Esophagus muscularis mucosa (tissue), 4 donors: ENCODE measurements at regions of chr2 and their contacts with region 1.

Region 1: DNA sequence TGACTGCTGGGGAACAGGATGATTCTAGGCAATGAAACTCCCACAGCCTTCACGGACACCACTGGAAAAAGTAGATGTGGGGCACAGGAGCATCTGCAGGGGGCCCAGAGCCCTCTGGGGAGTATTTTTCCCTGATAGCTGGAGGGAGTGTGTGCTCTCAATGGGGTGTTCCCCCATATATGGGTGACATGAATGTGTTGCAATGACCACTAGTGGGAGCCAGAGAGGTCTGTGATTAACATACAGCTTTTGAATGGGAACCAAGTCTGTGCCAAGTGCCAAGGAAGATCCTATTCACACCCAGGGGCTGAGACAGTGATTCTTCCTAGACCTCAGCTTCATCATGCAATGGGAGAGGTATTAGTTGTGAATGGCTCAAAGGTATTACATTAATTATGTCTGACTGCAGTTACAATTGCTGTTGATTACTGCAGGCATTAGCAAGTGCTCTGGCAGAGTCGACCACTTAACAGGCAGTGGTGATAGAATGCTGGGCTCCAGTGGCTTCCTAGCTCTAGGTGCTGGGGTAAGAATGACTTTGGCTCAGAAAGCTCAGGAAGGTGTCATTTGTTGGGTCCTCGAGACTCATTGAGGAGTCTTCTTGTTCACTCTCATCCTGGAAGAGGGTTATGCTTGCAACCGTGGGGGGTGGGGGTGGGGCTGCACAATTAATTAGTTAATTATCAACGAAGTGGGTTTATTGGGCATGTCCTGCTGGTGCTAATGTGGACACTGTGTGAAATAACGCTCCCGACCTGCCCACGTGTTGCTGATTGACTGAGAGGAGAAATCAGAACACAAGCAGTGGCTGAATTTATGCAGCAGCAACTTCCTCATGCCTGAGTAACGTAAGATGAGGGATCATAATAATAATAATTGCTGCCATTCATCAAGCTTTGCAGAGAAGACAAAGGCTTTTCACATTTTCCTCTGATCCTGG is 194.1 kb downstream of the CLIP4 start:
- DNase-seq: no peak
- H3K4me3 ChIP-seq: no peak overlapping the region
- H3K27ac ChIP-seq: no peak overlapping the region
- H3K4me1 ChIP-seq: no peaks in the 10 kb centered on the region
- H3K27me3 ChIP-seq: peaks cover 0 to 16% (median 0%) of the 10 kb centered on the region in 4 donors
- CTCF ChIP-seq: peak; percentile 53 to 74 (median 61)
- EP300 ChIP-seq: no peak
- POLR2A ChIP-seq: no peak

Region 2: DNA sequence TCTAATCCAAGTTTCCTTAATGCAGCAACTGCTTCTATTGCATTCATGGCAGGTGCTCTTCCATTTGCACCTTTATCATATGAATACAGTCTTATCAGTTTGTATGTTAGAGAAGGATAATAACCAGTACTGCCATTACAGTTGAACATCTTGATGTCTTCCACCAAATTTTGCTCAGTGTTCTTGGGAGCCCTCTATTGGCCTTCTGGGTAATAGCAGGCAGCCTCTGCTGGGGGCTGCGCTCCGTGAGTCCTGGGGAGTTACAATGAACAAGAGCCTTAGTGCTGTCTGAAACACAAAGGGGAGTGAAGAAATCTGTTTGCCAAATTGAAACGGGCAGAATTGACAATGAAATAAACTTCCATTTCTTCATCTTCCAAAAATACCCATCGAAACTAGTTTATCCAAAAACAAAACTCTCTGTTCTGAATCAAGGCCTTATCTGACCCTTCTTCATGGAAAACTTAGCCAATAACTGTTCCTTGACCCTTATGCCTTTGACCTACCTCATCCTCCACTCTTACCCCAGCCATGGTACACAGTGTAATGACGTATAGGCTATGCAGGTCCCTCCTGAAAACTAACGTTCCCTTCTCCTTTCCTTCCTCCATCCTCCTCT is 532.1 kb after region 1 on chr2:
- intact Hi-C with region 1: loop called (anchors 5 kb)
- DNase-seq: no peak
- H3K4me3 ChIP-seq: no peak overlapping the region
- H3K27ac ChIP-seq: no peak overlapping the region
- H3K4me1 ChIP-seq: peaks cover 0 to 5% (median 0%) of the 10 kb centered on the region in 4 donors
- H3K27me3 ChIP-seq: no peaks in the 10 kb centered on the region
- CTCF ChIP-seq: peak; percentile 80 to 97 (median 89)
- EP300 ChIP-seq: no peak
- POLR2A ChIP-seq: no peak